Psoas muscle (tissue), 8 donors: ENCODE measurements at regions of chr21 and their contacts with region 1.

Region 1: GRCh38 chr21:44510508-44511210 is 29.3 kb downstream of the KRTAP10-1 start:
- DNase-seq: peak; percentile 50 to 60
- ATAC-seq: peak; percentile 52 to 73 (median 66)
- H3K4me3 ChIP-seq: no peak overlapping the region
- H3K27ac ChIP-seq: no peak overlapping the region
- H3K4me1 ChIP-seq: no peaks in the 10 kb centered on the region
- H3K27me3 ChIP-seq: peaks cover 0 to 65% (median 13%) of the 10 kb centered on the region in 3 donors
- CTCF ChIP-seq: peak; percentile 57

Region 2: DNA sequence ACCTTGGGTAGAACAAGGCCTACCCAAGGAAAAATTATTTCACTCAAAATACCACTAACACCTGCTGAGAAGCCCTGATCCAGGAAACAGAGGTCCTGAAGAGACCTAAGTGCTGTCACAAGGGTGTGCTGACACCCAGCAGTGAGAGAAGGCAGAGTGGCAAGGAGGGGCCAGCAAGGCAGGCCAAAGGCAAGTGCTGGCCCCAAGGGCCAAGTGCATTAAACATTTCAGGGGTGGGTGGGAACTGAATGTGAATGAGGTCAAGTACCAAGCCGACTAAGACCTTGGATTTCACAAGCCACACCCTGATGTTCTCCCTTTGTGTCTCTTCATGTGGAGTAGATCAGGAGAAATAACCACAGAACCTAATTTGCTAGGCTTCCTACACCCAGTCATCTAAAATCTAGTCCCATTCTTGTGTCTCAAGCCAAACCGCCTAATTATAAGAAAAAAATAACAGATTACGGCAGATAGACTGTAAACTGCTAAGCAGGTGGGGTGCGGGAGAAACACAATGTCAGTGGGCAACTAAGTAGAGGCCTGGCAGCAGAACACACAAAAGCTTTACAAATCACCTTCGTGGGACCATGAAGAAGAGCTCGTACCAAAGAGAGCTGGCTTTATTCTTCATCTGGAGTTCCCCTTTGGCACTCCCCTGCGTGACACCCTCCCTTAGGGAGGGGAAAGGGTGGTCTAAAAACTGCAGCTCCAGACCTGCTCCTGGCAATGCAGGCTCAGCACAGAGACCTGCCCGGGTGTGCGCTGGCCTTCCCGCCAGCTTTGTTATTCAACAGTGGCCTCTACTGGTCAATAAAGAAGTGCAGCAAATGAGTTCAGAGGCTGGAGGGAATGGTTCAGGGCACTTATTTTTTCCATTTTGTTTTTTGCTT is 282.3 kb after region 1 on chr21:
- intact Hi-C with region 1: loop called (anchors 5 to 10 kb)
- DNase-seq: peak; percentile 42 to 64
- ATAC-seq: peak; percentile 83 to 93 (median 88)
- H3K4me3 ChIP-seq: no peak overlapping the region
- H3K27ac ChIP-seq: no peak overlapping the region
- H3K4me1 ChIP-seq: peaks cover 30% of the 10 kb centered on the region
- H3K27me3 ChIP-seq: no peaks in the 10 kb centered on the region
- CTCF ChIP-seq: peak; percentile 76

Region 3: DNA sequence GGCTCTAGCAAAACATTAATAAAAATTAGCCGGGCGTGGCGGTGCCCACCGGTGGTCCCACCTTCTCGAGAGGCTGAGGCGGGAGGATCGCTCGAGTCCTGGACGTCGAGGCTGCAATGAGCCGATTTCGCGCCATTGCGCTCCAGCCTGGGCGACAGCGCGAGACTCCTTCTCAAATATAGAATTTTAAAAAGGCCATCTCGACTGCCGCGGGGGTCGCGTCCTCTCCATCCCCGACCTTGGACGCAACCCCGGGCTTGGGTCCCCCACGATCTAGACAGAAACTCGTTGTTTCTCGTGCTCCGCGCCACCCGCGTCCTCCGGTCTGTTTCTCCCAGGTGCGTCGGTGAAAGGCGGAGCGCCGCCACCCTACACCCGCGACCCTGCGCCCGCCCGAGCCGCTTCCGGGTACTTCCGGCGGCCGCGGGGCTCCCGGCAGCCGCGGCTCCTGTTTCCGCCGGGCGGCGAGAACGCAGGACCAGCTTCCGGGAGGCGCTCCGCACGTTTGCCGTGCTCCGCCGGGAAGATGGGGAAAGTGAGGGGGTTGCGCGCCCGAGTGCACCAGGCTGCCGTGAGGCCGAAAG is 429.0 kb after region 1 on chr21 and contains the start of gene SLX9:
- intact Hi-C with region 1: loop called in 1 of 2 experiments (anchors 10 kb)
- DNase-seq: peak; percentile 80 to 89
- ATAC-seq: peak; percentile 92 to 98 (median 95)
- H3K4me3 ChIP-seq: peak within 1 kb of the TSS; percentile 96
- H3K27ac ChIP-seq: peak within 1 kb of the TSS; percentile 78
- H3K4me1 ChIP-seq: peaks cover 17% of the 10 kb centered on the region
- H3K27me3 ChIP-seq: no peaks in the 10 kb centered on the region
- CTCF ChIP-seq: no peak
- total RNA-seq, gene SLX9: 26.3 to 58.0 (median 32.5) TPM